ENCODE measurements at regions of chr13 and their contacts with region 1.

Region 1: GRCh38 chr13:41613984-41614661 is 156.8 kb downstream of the RGCC start:
- DNase-seq: no peak
- ATAC-seq: no peak
- H3K4me3 ChIP-seq: no peak overlapping the region
- H3K4me3 Mint-ChIP-seq: no peak overlapping the region
- H3K27ac ChIP-seq: no peak overlapping the region
- H3K27ac Mint-ChIP-seq: no peak overlapping the region
- H3K4me1 ChIP-seq: no peaks in the 10 kb centered on the region
- H3K4me1 Mint-ChIP-seq: no peaks in the 10 kb centered on the region
- H3K27me3 ChIP-seq: no peaks in the 10 kb centered on the region
- H3K27me3 Mint-ChIP-seq: no peaks in the 10 kb centered on the region

Region 2: DNA sequence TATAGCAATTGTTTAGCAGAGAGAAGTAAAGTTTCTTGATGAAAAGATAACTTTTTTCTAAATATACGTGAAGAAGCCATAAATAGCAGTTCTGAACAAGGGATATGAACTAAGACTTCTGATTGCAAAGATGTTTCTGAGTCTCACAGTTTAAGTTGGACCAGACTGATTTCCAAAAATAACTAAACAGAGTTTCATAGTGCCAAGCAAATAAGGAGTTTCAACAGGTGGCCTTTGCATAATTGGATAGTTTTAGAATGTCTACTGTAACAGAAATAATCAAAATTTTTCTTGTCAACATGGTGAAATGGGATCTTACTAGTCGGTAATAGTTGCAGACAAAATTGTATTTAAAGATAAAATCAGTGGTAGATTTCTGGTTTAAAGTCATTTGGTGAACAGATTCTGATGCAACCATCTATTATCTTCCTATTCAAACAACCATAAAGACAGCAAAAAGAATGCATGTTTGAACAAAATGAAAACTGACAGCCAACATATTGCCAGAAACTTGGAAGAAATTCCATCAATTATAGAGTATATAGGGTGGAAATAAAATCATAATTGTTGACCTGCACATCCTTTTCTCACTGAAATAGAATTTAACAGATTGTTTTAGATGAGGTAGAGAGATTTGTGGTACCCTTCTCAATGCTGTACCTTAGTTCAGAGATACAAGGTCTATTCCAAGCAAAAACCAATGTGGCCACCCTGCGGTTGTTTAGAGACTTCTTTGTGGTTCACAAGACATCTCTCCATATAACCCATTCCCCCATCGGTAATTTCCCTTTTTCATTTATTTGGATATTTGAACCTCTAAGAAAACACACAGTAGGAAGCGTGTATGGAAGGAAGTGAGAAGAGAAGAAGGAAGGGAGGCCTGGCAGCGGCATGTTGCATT is 1683.3 kb before region 1 on chr13:
- CTCF ChIA-PET with region 1: no interaction called
- POLR2A ChIA-PET with region 1: no interaction called
- intact Hi-C with region 1: loop called in 1 of 2 experiments (anchors 5 kb)
- DNase-seq: no peak
- ATAC-seq: no peak
- H3K4me3 ChIP-seq: no peak overlapping the region
- H3K4me3 Mint-ChIP-seq: peak overlapping the region in 3 of 10 donors; percentile 22 to 50 (median 35)
- H3K27ac ChIP-seq: no peak overlapping the region
- H3K27ac Mint-ChIP-seq: no peak overlapping the region
- H3K4me1 ChIP-seq: no peaks in the 10 kb centered on the region
- H3K4me1 Mint-ChIP-seq: peaks cover 0 to 21% (median 15%) of the 10 kb centered on the region in 7 donors
- H3K27me3 ChIP-seq: no peaks in the 10 kb centered on the region
- H3K27me3 Mint-ChIP-seq: no peaks in the 10 kb centered on the region

Region 3: DNA sequence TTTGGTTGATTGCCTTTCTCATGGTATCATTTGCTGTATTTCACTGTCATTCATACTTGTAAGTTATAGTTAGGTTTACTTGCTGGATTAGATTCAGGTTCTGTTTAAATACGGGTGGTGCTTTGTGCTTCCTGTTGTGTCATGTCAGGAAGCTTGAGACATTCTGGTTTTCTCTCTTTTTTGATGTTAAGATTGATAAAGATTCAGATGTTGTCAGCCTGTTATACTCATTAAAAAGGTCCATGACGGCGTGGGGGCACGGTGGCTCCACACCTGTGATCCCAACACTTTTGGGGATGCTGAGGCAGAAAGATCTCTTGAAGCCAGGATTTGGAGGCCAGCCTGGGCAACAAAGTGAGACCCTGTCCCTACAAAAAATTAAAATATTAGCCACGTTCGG is 257.3 kb before region 1 on chr13:
- CTCF ChIA-PET with region 1: no interaction called
- POLR2A ChIA-PET with region 1: no interaction called
- intact Hi-C with region 1: no loop called
- DNase-seq: peak in 7 of 9 donors; percentile 58 to 74 (median 71)
- ATAC-seq: peak; percentile 83
- H3K4me3 ChIP-seq: peak overlapping the region; percentile 14
- H3K4me3 Mint-ChIP-seq: peak overlapping the region; percentile 66 to 87 (median 78)
- H3K27ac ChIP-seq: peak overlapping the region; percentile 83
- H3K27ac Mint-ChIP-seq: peak overlapping the region; percentile 91 to 98 (median 96)
- H3K4me1 ChIP-seq: peaks cover 36 to 69% of the 10 kb centered on the region in 2 donors
- H3K4me1 Mint-ChIP-seq: peaks cover 31 to 88% (median 76%) of the 10 kb centered on the region in 7 donors
- H3K27me3 ChIP-seq: no peaks in the 10 kb centered on the region
- H3K27me3 Mint-ChIP-seq: no peaks in the 10 kb centered on the region

Region 4: DNA sequence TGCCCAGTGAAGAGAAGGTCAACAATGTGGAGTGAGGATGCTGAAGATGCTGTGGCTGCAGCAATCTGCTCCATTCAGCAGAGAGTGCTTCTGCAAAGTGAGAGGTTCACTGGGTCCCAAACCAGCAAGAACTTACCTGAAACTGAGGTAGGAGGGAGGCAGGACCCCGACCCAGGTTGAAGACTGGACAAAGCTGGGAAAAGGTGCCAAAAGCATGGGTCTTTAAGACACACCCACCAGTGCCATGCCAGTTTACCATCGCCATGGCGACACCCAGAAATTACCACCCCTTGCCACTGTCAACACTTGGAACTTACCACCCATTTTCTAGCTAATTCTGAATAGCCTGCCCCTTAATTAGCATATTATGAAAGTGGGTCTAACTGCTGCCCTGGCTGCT is 86.1 kb before region 1 on chr13:
- CTCF ChIA-PET with region 1: no interaction called
- POLR2A ChIA-PET with region 1: no interaction called
- intact Hi-C with region 1: no loop called
- DNase-seq: no peak
- ATAC-seq: no peak
- H3K4me3 ChIP-seq: no peak overlapping the region
- H3K4me3 Mint-ChIP-seq: no peak overlapping the region
- H3K27ac ChIP-seq: no peak overlapping the region
- H3K27ac Mint-ChIP-seq: no peak overlapping the region
- H3K4me1 ChIP-seq: no peaks in the 10 kb centered on the region
- H3K4me1 Mint-ChIP-seq: peaks cover 0 to 3% (median 0%) of the 10 kb centered on the region in 7 donors
- H3K27me3 ChIP-seq: no peaks in the 10 kb centered on the region
- H3K27me3 Mint-ChIP-seq: peaks cover 0 to 5% (median 0%) of the 10 kb centered on the region in 5 donors

Region 5: GRCh38 chr13:41652727-41653361 is 38.7 kb after region 1 on chr13:
- CTCF ChIA-PET with region 1: no interaction called
- POLR2A ChIA-PET with region 1: no interaction called
- intact Hi-C with region 1: no loop called
- DNase-seq: peak in 7 of 9 donors; percentile 19 to 60 (median 50)
- ATAC-seq: peak; percentile 54
- H3K4me3 ChIP-seq: no peak overlapping the region
- H3K4me3 Mint-ChIP-seq: no peak overlapping the region
- H3K27ac ChIP-seq: no peak overlapping the region
- H3K27ac Mint-ChIP-seq: peak overlapping the region in 1 of 9 donors; percentile 36
- H3K4me1 ChIP-seq: peaks cover 0 to 5% of the 10 kb centered on the region in 2 donors
- H3K4me1 Mint-ChIP-seq: peaks cover 0 to 24% (median 12%) of the 10 kb centered on the region in 7 donors
- H3K27me3 ChIP-seq: no peaks in the 10 kb centered on the region
- H3K27me3 Mint-ChIP-seq: no peaks in the 10 kb centered on the region

Region 6: DNA sequence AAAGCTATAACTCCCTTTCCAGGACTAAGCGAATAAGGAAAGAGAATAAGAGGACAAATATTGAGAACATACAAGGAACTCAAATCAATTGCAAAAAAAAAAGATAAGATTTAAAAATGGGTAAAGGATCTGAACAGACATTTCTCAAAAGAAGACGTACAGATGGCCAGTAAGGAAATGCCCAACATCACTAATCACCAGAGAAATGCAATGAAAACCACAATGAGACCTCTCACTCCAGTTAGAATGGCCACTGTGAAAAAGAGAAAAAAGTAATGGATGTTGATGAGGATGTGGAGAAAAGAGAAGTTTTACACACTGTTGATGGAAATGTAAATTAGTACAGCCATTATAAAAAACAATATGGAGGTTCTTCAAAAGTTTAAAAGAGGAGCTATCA is 283.0 kb after region 1 on chr13:
- CTCF ChIA-PET with region 1: no interaction called
- POLR2A ChIA-PET with region 1: no interaction called
- intact Hi-C with region 1: no loop called
- DNase-seq: no peak
- ATAC-seq: no peak
- H3K4me3 ChIP-seq: no peak overlapping the region
- H3K4me3 Mint-ChIP-seq: no peak overlapping the region
- H3K27ac ChIP-seq: no peak overlapping the region
- H3K27ac Mint-ChIP-seq: no peak overlapping the region
- H3K4me1 ChIP-seq: no peaks in the 10 kb centered on the region
- H3K4me1 Mint-ChIP-seq: peaks cover 0 to 12% (median 0%) of the 10 kb centered on the region in 7 donors
- H3K27me3 ChIP-seq: no peaks in the 10 kb centered on the region
- H3K27me3 Mint-ChIP-seq: no peaks in the 10 kb centered on the region

Measured in naive thymus-derived CD4-positive, alpha-beta T cell (primary cell).